ENCODE measurements at regions of chr14 and their contacts with region 1.

Region 1: GRCh38 chr14:20855652-20856291 is 35.4 kb upstream of the RNASE3 start:
- DNase-seq: peak; percentile 42
- H3K4me3 ChIP-seq: no peak overlapping the region
- H3K27ac ChIP-seq: no peak overlapping the region
- H3K4me1 ChIP-seq: peaks cover 0 to 3% of the 10 kb centered on the region in 2 experiments; a peak in 1 of 4 replicates
- H3K27me3 ChIP-seq: peaks cover 43% of the 10 kb centered on the region; the same call in 1 of the 2 replicates
- CTCF ChIP-seq: peak; percentile 66
- EP300 ChIP-seq: no peak
- RAD21 ChIP-seq: peak; percentile 60

Region 2: DNA sequence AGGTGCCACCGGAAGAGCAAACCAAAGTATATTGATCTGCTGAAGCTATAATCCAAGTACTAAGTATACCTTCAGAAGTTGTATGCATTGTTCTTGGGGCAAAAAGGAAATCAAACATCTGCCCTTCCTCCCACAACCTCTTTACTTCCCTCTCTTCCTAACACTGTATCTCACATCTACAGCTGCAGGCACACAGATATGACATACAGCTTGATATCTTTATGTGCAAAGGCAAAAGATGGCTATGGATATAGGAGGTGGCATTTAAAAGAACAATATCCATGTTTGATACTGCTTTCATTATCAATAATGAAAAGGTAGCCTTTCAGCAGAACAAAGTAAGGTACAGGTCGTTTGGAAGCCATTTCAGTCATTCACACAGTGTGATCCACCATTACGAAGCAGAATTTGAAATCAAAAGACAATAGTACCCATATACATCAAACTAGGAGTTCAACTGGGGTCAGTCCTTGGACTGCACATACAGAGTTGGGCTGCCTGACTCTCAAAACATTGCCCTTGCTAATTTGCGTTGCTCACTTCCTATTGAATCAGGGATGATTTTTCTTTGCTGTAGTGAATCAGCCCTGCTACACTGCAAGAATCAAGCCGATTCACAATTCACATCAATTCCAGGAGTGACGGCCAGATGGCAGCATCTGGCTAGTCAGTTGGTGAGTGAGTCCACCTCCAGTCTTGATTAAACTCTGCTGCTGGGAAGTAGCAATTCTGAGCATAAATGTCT is 158.3 kb before region 1 on chr14:
- CTCF ChIA-PET with region 1: interaction called, 11 read pairs
- POLR2A ChIA-PET with region 1: no interaction called
- DNase-seq: peak; percentile 59
- H3K4me3 ChIP-seq: no peak overlapping the region; a peak in 1 of 4 replicates
- H3K27ac ChIP-seq: no peak overlapping the region
- H3K4me1 ChIP-seq: no peaks in the 10 kb centered on the region
- H3K27me3 ChIP-seq: no peaks in the 10 kb centered on the region; the same call in 1 of the 2 replicates
- CTCF ChIP-seq: peak; percentile 75
- EP300 ChIP-seq: no peak
- RAD21 ChIP-seq: peak; percentile 73

Region 3: DNA sequence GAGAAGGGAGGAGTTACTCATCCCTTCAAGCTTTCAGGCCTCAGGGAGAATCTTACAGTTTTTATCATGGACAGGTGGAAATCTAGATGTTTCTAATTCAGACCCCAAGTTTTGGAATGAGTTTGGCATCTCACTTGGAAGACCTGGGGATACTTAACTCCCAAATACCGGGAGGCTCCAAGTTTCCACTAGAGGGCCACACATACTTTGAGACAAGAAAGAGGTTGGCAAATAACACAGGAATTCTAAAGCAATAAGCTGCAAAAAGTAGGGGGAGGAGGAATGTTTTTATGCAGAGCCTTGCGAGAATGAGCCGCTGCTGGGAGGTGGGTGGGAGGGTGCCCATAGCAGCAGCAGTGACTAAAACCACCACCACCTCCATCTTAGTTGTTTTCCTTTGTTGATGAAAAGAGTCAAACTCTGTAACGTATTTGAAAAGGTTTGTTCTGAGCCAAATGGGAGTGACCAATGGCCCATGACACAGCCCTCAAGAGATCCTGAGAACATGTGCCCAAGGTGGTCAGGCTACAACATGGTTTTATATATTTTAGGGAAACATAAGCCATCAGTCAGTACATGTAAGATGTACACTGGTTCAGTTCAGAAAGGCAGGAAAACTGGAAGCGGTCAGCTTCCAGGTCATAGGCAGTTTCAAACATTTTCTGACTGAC is 19.0 kb before region 1 on chr14:
- CTCF ChIA-PET with region 1: no interaction called
- POLR2A ChIA-PET with region 1: no interaction called
- DNase-seq: no peak
- H3K4me3 ChIP-seq: no peak overlapping the region
- H3K27ac ChIP-seq: no peak overlapping the region
- H3K4me1 ChIP-seq: no peaks in the 10 kb centered on the region
- H3K27me3 ChIP-seq: peaks cover 27% of the 10 kb centered on the region; the same call in 1 of the 2 replicates
- CTCF ChIP-seq: peak; percentile 39
- EP300 ChIP-seq: no peak
- RAD21 ChIP-seq: no peak

Region 4: GRCh38 chr14:20866963-20867362 is 11.2 kb after region 1 on chr14:
- CTCF ChIA-PET with region 1: interaction called, 11 read pairs
- POLR2A ChIA-PET with region 1: no interaction called
- DNase-seq: no peak
- H3K4me3 ChIP-seq: no peak overlapping the region
- H3K27ac ChIP-seq: no peak overlapping the region
- H3K4me1 ChIP-seq: no peaks in the 10 kb centered on the region
- H3K27me3 ChIP-seq: no peaks in the 10 kb centered on the region; the same call in 1 of the 2 replicates
- CTCF ChIP-seq: peak; percentile 43; the same call in 1 of the 2 replicates
- EP300 ChIP-seq: no peak
- RAD21 ChIP-seq: no peak